ENCODE measurements at regions of chr9 and their contacts with region 1.

Region 1: DNA sequence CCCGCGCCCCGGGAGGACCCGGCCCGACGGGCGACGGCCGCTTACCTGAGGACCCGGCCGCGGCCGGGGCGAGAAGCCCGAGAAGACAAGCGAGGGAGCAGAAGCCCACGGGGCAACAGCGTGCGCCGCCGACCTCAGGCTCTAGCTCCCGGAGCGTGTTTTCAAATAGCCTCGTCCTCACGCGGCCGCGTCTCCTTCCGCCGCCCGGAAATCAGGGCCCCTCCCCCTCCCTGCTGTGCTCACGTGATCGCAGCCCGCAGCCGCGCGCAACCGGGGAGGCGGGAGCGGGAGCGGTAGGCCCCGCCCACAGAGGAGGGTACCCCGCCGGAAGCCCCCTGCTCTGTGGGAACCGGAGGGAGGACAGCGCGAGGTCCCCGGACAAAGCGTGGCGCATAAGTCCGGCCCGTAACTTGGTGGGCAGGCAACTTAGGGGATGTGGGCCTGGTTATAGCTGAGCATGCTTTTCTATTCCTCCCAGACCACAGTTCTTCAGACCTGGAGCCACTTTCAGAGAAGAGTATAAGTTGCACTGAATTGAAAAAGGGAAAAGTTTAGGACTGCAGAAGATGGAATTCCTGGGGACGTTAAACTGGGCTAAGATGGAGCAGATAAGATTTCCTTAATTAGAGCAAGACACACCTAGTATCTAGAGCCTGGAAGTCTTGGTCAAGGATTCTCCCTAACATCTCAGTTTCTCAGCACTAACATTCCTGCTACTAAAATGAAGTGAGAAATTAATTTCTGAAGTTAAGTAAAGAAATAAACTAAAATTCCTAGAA is at the start of gene TEX10:
- DNase-seq: peak; percentile 90
- ATAC-seq: peak; percentile 98 to 99 (median 98)
- H3K4me3 ChIP-seq: peak within 1 kb of the TSS; percentile 77 to 97 (median 84)
- H3K27ac ChIP-seq: peak within 1 kb of the TSS; percentile 42 to 93 (median 80)
- H3K4me1 ChIP-seq: peaks cover 0 to 32% (median 16%) of the 10 kb centered on the region in 9 donors
- H3K27me3 ChIP-seq: no peaks in the 10 kb centered on the region
- CTCF ChIP-seq: no peak
- total RNA-seq, gene TEX10: 7.1 to 10.3 (median 9.2) TPM

Region 2: DNA sequence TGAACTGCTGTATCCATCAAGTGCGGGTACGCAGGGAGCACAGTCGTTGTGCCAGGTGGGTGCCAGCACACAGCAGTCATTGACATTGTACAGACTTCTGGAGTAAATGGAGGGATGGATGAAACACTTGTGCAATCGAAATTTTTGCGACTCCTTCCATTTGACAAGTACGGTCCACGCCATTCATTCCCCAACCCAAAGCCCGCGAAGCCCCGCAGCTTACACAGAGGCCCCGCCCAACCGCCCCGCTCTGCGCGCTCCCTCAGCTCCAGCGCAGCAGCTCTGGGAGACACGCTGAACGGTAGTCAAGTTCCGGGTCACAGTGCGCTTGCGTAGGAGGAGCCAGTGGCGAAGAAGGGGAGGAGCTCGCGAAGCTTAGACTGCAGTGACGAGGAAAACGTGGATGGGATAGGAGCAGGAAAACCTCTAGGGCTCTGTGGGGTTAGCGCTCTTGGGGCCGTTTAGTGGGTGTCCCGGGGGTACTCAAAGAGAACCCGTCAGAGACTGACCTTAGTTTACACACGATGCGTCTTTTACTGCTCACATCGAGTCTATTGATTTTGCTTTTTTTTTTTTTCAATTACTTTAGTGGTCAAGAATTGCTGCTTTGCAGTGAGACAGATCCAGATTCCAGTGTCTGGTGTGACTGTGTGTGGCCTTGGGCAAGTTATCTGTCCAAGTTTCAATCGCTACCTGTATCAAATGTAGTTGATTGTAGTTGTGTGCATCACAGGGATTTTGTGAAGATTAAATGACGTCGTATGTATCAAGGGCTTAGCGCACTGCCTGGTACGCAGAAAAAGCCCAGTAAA is 58.8 kb after region 1 on chr9:
- intact Hi-C with region 1: loop called in 1 of 10 experiments (anchors 5 kb)
- DNase-seq: peak; percentile 89 to 90
- ATAC-seq: peak; percentile 98 to 100 (median 99)
- H3K4me3 ChIP-seq: peak overlapping the region in 9 of 10 donors; percentile 34 to 61 (median 54)
- H3K27ac ChIP-seq: peak overlapping the region in 2 of 10 donors; percentile 4 to 64
- H3K4me1 ChIP-seq: peaks cover 0 to 12% (median 0%) of the 10 kb centered on the region in 9 donors
- H3K27me3 ChIP-seq: peaks cover 0 to 14% (median 0%) of the 10 kb centered on the region in 7 donors
- CTCF ChIP-seq: no peak

Region 3: GRCh38 chr9:100426530-100427428 is 73.9 kb after region 1 on chr9 and contains the start of gene MSANTD3:
- intact Hi-C with region 1: loop called in 6 of 10 experiments (anchors 5 to 10 kb)
- DNase-seq: peak; percentile 55 to 73
- ATAC-seq: peak; percentile 82 to 92 (median 87)
- H3K4me3 ChIP-seq: peak within 1 kb of the TSS; percentile 72 to 99 (median 91)
- H3K27ac ChIP-seq: peak within 1 kb of the TSS; percentile 61 to 94 (median 88)
- H3K4me1 ChIP-seq: peaks cover 4 to 36% (median 28%) of the 10 kb centered on the region in 9 donors
- H3K27me3 ChIP-seq: no peaks in the 10 kb centered on the region
- CTCF ChIP-seq: peak in 3 of 9 donors; percentile 27 to 39 (median 31)
- total RNA-seq, gene MSANTD3: 11.9 to 32.2 (median 20.1) TPM

Region 4: GRCh38 chr9:100856238-100856637 is 503.3 kb after region 1 on chr9:
- intact Hi-C with region 1: no loop called
- DNase-seq: no peak
- ATAC-seq: no peak
- H3K4me3 ChIP-seq: no peak overlapping the region
- H3K27ac ChIP-seq: no peak overlapping the region
- H3K4me1 ChIP-seq: no peaks in the 10 kb centered on the region
- H3K27me3 ChIP-seq: no peaks in the 10 kb centered on the region
- CTCF ChIP-seq: no peak